Calu3 (cell line): ENCODE measurements at regions of chr1 and their contacts with region 1.

Region 1: GRCh38 chr1:205600085-205600484 is 31.7 kb downstream of the ELK4 start:
- DNase-seq: no peak
- H3K4me3 Mint-ChIP-seq: peak overlapping the region; percentile 30
- H3K27ac Mint-ChIP-seq: peak overlapping the region; percentile 86
- H3K4me1 Mint-ChIP-seq: peaks cover 68% of the 10 kb centered on the region
- H3K27me3 Mint-ChIP-seq: no peaks in the 10 kb centered on the region
- CTCF ChIP-seq: no peak

Region 2: DNA sequence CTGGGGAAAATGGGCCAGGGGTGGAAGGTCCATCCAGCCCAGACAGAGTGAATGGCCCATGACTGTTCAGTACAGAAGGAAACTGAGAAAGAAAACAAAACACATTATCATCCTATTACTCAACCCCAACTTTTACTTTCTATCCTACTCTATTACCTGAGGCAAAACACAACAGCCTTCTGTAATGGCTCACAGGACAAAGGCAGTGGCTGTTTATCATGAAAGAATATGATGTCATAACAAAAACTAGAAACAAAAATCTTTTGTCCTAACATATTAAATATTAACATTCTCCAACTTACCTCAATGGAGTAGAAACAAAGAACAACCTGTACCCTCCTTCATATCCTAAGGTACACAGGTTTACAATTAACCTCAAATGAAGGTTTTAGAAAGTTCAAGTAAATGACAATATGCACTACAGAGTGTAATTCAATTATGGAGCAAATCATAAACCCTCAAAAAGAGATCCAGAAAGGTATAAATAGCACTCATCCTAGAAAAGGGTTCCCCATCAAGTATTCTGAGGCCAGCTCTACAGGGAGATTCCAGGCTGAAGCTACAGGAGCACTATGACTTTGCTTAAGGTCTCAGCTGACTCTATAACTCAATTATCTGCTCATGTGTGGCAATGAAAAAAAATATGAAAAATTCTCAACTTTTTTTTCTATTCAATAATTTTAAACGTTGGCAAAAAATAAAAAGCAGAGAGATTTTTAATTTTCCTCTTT is 16.6 kb after region 1 on chr1:
- CTCF ChIA-PET with region 1: interaction called, 7 read pairs
- intact Hi-C with region 1: loop called (anchors 2 kb)
- DNase-seq: peak; percentile 72
- H3K4me3 Mint-ChIP-seq: peak overlapping the region; percentile 45
- H3K27ac Mint-ChIP-seq: peak overlapping the region; percentile 91
- H3K4me1 Mint-ChIP-seq: peaks cover 73% of the 10 kb centered on the region
- H3K27me3 Mint-ChIP-seq: no peaks in the 10 kb centered on the region
- CTCF ChIP-seq: no peak

Region 3: GRCh38 chr1:205729945-205730610 is 130.0 kb after region 1 on chr1:
- CTCF ChIA-PET with region 1: no interaction called
- intact Hi-C with region 1: no loop called
- DNase-seq: no peak
- H3K4me3 Mint-ChIP-seq: no peak overlapping the region
- H3K27ac Mint-ChIP-seq: no peak overlapping the region
- H3K4me1 Mint-ChIP-seq: peaks cover 33% of the 10 kb centered on the region
- H3K27me3 Mint-ChIP-seq: no peaks in the 10 kb centered on the region
- CTCF ChIP-seq: no peak